Prostate gland (tissue), 2 donors: ENCODE measurements at regions of chr7 and their contacts with region 1.

Region 1: DNA sequence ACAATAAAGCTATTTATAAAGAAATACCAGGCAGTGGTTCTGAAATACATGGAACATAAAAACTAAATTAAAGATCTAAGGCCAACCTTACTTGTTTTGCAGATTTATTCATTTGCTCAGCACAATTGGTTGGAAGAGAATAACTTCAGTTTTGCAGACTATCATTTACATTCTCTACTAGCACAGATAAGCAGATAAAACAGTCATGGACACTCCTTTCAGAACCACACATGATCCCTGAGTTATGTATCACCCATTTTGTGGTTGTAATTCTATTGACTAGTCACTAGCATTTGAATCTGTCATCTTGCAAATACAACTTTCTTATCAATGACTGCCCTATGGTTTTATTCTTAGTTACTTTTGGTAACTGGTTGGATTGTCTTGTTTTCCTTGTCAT is 45.1 kb downstream of the PRKAR2B start:
- DNase-seq: no peak
- H3K4me3 ChIP-seq: no peak overlapping the region
- H3K27ac ChIP-seq: no peak overlapping the region
- H3K4me1 ChIP-seq: no peaks in the 10 kb centered on the region
- H3K27me3 ChIP-seq: no peaks in the 10 kb centered on the region
- CTCF ChIP-seq: no peak
- POLR2A ChIP-seq: no peak

Region 2: DNA sequence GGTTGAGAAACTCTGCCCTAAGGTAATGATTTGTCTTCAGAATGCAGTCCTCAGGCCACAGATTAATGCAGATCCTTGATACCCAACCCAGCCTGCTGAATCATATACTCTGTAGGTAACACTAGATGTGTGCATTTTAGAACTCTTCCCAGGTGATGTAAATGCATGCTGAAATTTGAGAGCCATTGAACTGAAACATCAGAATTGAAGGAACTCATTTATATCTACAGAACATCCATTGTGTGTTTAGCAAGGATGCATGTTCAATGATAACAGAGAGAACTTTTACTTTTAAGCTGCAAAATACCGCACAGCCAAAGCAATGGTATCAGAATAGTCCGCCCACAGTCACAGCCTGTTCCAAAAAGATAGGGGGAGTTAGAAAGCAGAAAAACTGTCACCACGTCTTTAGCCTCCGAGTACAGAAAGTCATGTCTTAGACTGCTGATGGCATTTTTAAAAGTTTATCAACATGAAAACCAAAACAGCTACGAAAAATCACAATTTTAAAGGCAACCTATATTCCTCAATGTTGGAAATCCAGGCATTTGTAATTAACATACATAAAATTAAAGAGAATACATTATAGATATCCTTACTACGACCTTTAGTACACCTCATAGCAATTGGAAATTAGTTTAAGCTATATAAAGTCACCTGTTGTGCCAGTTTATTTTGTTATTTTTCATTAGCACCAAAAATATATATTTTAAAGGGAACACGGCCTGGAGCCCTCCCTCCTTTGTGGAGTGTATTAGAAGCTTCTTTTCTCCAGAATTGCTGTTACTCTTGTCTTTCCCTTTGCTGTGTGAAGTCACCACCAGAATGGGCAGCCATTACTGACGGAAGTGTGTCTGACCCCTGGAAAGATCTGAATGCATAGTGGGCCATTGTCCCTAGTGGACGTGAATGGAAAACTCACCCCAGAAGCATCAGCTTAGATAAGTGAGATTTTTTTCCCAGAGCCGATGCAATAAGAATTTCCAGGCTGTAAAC is 110.9 kb before region 1 on chr7:
- intact Hi-C with region 1: loop called (anchors 5 kb)
- DNase-seq: no peak
- H3K4me3 ChIP-seq: no peak overlapping the region
- H3K27ac ChIP-seq: no peak overlapping the region
- H3K4me1 ChIP-seq: no peaks in the 10 kb centered on the region
- H3K27me3 ChIP-seq: no peaks in the 10 kb centered on the region
- CTCF ChIP-seq: no peak
- POLR2A ChIP-seq: no peak

Region 3: GRCh38 chr7:107262857-107263256 is 173.2 kb after region 1 on chr7:
- intact Hi-C with region 1: no loop called
- DNase-seq: no peak
- H3K4me3 ChIP-seq: no peak overlapping the region
- H3K27ac ChIP-seq: no peak overlapping the region
- H3K4me1 ChIP-seq: no peaks in the 10 kb centered on the region
- H3K27me3 ChIP-seq: no peaks in the 10 kb centered on the region
- CTCF ChIP-seq: no peak
- POLR2A ChIP-seq: no peak

Region 4: GRCh38 chr7:107826451-107826850 is 736.8 kb after region 1 on chr7:
- intact Hi-C with region 1: no loop called
- DNase-seq: no peak
- H3K4me3 ChIP-seq: no peak overlapping the region
- H3K27ac ChIP-seq: no peak overlapping the region
- H3K4me1 ChIP-seq: no peaks in the 10 kb centered on the region
- H3K27me3 ChIP-seq: no peaks in the 10 kb centered on the region
- CTCF ChIP-seq: no peak
- POLR2A ChIP-seq: no peak